Tibial artery (tissue), 4 donors: ENCODE measurements at regions of chr2 and their contacts with region 1.

Region 1: DNA sequence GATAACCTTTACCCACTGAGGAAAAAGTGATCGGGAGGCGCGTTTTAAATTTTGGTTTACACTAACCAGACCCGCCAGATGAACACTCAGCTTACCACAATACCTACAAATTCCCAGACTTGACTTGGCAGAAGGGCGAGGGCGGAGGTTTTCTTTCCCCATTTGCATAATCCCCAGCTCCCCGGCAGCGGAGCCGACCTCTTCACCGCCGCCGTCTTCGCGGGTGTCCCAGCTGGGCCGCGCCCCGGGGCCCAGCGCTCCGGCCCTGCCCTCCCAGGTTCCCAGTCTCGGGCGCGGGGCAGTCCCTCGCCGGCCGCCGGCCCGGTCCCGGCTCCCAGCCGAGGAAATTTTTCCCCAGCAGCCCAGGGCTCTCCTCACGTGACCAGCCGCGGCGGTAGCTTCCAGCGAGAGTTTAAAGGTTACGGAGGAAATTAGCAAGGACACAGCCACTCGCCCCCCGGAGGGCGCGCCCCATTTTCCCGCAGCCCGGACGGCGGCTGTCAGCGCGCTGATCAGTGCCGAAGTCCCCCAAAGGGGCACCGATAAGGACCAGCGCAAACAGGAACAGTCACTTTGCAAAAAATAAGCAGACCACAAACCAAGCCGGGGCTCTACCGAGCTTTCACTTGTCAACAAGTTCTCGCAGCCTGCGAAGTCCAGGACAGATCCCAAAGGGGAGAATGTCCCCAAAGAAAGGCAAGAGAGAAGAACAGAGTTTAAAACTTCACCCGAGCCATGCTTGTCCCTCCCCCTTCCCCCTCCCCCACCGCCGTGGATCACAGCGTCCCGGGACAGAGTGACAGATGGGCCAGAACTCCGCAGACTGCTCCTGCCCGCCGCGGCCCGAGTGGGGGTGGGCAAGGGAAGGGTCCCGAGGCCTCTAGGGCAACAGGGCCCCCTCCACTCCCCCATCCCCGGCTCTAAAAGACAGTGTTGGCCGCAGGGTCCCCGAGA is 1.3 kb upstream of the PRKCE start:
- DNase-seq: peak; percentile 79 to 92
- H3K4me3 ChIP-seq: peak overlapping the region; percentile 73 to 90
- H3K27ac ChIP-seq: peak overlapping the region; percentile 87 to 100
- H3K4me1 ChIP-seq: peaks cover 4 to 39% (median 14%) of the 10 kb centered on the region in 4 donors
- H3K27me3 ChIP-seq: no peaks in the 10 kb centered on the region
- CTCF ChIP-seq: no peak

Region 2: DNA sequence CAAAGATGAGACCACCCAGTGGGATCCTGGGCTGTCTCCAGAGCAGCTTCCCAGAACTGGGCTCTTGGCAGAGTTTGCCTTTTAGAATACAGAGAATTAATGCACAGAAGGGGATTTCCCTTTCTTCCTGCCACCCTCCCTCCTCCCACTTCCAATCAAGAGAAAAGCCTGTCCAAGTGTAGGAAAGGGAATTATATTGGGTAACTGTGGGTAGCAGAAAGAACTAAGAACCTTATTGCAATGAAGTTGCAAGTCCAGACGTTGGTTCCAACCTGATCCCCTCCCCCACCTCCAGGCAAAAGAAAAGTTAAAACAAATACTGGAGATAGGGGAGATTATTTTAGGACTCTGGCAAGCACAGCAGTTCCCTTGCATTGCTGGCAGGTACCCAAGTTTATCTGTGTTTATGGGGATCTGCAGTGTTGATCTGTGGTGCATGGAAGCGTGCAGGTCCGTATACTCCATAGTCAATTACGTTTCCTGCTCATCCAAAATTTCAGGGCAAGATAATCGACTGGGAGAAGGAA is 115.7 kb after region 1 on chr2:
- intact Hi-C with region 1: no loop called
- DNase-seq: no peak
- H3K4me3 ChIP-seq: no peak overlapping the region
- H3K27ac ChIP-seq: no peak overlapping the region
- H3K4me1 ChIP-seq: peaks cover 0 to 18% (median 9%) of the 10 kb centered on the region in 4 donors
- H3K27me3 ChIP-seq: no peaks in the 10 kb centered on the region
- CTCF ChIP-seq: no peak

Region 3: GRCh38 chr2:45778720-45779171 is 128.6 kb after region 1 on chr2:
- intact Hi-C with region 1: loop called (anchors 5 kb)
- DNase-seq: peak in 1 of 2 donors; percentile 65
- H3K4me3 ChIP-seq: no peak overlapping the region
- H3K27ac ChIP-seq: no peak overlapping the region
- H3K4me1 ChIP-seq: peaks cover 0 to 12% (median 2%) of the 10 kb centered on the region in 4 donors
- H3K27me3 ChIP-seq: no peaks in the 10 kb centered on the region
- CTCF ChIP-seq: peak; percentile 73 to 78